Activated naive CD4-positive, alpha-beta T cell treated with anti-CD3 and anti-CD28 coated beads for 36 hours (primary cell): ENCODE measurements at regions of chr12 and their contacts with region 1.

Region 1: GRCh38 chr12:50825372-50825838 is 17.3 kb upstream of the TMPRSS12 start:
- DNase-seq: no peak
- H3K4me3 Mint-ChIP-seq: no peak overlapping the region
- H3K27ac Mint-ChIP-seq: peak overlapping the region; percentile 52
- H3K4me1 Mint-ChIP-seq: peaks cover 10% of the 10 kb centered on the region
- H3K27me3 Mint-ChIP-seq: no peaks in the 10 kb centered on the region

Region 2: DNA sequence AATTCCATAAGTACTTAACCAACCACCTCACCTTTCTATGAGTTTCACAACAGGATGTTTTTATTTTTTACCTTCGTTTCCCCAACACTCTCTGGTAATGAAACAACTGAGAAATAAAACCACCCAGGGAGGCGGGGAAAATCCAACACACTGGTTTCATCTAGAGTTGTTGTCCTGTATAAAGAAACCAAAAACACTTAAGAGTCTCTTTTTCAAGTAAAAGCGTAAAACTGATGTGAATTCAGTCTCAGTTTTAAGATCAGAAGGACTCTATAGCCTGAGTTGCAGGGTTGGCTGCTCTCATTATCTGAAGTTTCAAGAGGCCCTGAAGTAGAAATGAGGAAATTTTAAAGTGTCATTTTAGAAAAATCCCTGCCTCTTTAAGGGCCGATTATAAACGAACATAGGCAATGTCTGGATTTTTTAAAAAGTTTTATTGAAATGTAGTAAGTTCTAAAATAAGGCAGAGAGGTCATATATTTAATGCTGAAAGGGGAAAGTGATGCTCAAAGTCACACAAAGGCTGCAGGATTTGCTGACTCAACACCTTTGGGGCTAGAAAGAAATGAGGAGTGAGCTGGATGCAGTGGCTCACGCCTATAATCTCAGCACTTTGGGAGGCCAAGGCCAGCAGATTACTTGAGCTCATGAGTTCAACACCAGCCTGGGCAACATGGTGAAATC is 154.1 kb after region 1 on chr12:
- CTCF ChIA-PET with region 1: interaction called, 29 read pairs
- intact Hi-C with region 1: no loop called
- DNase-seq: peak; percentile 73
- H3K4me3 Mint-ChIP-seq: no peak overlapping the region
- H3K27ac Mint-ChIP-seq: peak overlapping the region; percentile 93
- H3K4me1 Mint-ChIP-seq: peaks cover 25% of the 10 kb centered on the region
- H3K27me3 Mint-ChIP-seq: no peaks in the 10 kb centered on the region

Region 3: DNA sequence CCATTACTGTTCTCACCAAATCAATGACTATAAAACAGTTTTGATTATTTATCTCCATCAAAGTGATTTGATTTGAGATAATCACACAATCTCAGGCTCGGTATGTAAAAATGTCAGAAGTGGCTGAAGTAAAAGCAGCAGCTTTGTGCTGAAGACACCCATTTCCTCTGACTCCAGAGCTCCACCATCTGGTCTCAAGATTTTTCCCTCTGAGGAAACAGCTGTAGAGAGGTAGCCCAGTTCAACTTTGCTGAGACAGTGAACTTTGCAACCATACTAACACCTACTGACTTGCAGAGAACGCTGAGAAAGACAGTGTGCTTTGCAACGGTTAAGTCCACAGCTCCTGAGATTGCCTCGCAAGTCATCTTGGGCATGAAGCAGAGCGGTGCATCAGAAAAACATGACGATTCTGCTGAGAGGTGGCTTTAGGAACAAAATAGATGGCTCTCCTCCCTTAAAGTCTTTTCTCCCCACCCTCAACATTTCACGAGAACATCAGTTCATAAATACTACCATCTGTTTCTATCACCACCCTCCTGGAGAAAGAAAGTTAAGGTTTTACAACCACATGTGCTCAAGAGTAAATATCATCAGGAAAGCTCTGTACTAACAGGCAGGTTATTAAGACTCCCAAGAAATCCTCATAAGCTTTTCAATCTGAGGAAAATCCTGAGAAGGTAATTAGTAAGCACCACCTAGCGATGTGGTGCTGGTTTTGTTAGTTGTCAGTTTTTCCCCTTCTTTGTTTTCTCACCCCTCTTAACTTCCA is 161.7 kb after region 1 on chr12:
- CTCF ChIA-PET with region 1: interaction called, 29 read pairs
- intact Hi-C with region 1: loop called (anchors 1 kb)
- DNase-seq: peak; percentile 64
- H3K4me3 Mint-ChIP-seq: no peak overlapping the region
- H3K27ac Mint-ChIP-seq: no peak overlapping the region
- H3K4me1 Mint-ChIP-seq: peaks cover 56% of the 10 kb centered on the region
- H3K27me3 Mint-ChIP-seq: no peaks in the 10 kb centered on the region

Region 4: DNA sequence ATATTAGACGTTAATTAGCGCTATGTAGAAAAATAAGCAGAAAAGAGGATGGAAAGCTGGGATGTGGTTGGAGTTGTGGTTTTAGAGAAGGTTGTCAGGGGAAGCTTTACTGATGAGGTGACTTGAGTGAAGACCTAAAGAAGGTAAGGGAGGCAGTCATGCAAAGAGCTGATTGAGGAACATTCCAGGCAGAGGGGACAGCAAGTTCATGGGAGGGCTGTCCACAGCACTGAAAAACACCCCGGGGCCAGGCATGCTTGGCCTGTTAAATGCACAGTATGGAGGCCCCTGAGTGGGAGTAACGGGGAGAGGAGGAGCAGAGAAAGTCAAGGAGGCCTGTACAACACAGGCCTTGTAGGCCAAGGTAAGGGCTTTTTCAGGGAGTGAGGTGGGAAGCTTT is 429.2 kb after region 1 on chr12:
- CTCF ChIA-PET with region 1: no interaction called
- intact Hi-C with region 1: loop called (anchors 5 kb)
- DNase-seq: no peak
- H3K4me3 Mint-ChIP-seq: no peak overlapping the region
- H3K27ac Mint-ChIP-seq: no peak overlapping the region
- H3K4me1 Mint-ChIP-seq: no peaks in the 10 kb centered on the region
- H3K27me3 Mint-ChIP-seq: no peaks in the 10 kb centered on the region